Right ventricle myocardium inferior (tissue), 1 donor: ENCODE measurements at regions of chr2 and their contacts with region 1.

Region 1: DNA sequence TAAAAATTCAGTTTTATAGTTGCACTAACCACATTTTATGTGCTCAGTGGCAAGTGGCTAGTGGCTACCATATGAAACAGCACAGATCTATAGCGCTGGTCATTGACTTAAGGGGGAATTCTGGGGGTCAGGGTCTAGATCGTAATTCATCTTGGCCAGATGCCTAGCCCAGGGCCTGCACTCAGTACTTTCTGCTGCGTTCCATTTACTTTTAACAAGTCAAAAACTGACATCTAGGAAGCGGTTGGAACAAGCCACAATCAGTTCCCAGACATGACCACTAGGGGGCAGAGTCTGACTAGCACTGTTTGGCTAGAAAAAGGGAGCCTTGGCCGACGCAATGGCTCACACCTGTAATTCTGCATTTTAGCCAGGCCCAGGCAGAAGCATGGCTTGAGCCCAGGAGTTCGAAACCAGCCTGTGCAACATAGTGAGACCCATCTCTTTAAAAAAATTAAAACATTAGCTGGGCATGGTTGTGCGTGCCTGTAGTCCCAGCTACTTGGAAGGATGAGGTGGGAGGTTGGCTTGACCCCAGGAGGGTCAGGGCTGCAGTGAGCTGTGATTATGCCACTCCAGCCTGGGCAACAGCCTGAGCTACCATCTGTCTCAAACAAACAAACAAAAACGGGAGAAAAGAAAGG is 9.0 kb upstream of the TMBIM1 start:
- DNase-seq: peak; percentile 84
- ATAC-seq: peak; percentile 65

Region 2: GRCh38 chr2:218360447-218360846 is 59.1 kb after region 1 on chr2:
- intact Hi-C with region 1: loop called (anchors 1 kb)
- DNase-seq: no peak
- ATAC-seq: peak; percentile 27